Posterior cingulate gyrus (tissue), 11 donors: ENCODE measurements at regions of chr5 and their contacts with region 1.

Region 1: DNA sequence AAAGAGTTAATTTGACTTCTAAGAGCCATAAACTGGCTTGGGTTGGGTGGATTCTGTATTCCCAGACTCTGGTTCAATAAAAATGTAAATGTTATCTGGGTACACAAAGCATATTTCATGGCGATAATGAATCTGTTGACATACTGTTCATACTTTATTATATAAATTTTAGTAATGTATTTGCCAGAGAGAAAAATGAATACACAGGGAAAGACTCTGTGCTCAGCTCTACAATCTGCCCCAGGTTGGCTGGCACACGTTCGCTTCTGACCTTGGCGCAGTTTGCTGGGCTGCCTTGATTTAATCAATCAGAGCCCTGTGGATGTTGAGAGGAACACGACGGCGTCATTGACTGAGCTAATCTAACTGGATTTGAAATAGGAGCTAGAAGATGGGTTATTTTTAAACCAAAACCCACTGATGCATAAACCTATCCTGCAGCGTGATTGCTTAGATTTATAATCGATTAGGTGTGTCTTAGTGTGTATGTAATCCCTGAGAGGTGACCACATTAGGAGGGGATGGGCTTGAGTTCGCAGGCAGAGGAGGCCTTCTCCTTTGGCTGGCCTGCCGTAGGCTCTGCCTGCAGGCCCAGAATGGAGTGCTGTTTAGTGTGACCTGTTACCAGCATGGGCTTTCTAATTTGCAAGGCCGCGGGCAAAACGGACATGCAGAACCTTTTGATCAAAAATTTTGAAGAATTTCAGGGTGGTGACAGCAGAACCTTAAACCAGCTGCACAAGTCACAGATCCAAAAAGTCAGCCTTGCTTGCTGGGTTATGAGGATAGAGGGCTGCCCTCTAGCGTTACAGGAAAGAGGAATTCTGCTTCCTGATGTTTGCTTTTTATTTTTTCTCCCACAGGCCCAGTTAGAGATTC is 3.9 kb upstream of the ADCY2 start:
- DNase-seq: peak in 2 of 10 donors; percentile 31 to 35

Region 2: DNA sequence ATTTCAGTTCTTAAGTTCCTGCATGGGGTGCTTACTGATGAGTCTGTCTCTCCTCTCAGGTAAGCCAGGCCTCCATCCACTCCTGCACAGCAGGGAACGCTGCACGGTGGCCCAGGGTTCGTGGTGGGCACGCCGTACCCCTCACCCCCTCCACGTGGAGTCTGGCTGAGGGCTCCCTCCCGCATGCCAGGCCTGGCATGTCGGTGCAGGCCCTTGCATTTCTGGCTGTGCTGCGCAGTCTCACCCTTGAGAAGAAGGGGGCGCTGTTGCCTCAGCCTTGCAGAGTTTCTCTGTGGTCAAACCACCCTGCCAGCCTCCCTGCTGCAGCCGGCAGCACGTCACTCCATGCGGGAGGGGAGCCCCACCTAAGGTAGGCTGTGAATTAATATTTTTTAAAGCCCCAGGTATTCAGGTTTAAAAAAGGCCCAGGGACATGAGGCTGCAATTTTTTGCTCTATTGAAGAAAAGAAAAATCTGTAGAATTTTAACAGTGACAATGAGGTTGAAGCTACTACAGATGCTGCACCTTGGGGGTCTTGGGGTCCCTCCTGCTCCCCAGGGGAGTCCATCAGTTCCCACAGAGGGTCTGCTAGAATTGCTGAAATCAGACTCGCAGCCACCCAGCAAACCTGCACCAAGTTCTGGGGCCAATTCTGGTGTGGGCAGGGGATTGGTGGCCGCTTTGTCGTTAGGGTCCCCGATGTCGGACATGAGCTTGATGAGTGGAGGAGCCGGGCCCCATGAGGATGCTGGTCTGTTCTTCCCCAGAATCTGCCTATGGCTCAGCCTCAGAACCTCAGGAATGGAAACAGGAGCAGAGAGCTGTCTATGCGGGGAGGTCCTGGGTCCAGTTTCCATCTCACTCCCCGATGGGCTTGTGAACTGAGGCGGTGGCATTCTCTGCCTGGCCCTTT is 626.2 kb before region 1 on chr5:
- intact Hi-C with region 1: loop called (anchors 10 kb)
- DNase-seq: peak; percentile 70 to 97 (median 86)

Region 3: GRCh38 chr5:7779019-7780005 is 387.3 kb after region 1 on chr5:
- intact Hi-C with region 1: no loop called
- DNase-seq: no peak

Region 4: DNA sequence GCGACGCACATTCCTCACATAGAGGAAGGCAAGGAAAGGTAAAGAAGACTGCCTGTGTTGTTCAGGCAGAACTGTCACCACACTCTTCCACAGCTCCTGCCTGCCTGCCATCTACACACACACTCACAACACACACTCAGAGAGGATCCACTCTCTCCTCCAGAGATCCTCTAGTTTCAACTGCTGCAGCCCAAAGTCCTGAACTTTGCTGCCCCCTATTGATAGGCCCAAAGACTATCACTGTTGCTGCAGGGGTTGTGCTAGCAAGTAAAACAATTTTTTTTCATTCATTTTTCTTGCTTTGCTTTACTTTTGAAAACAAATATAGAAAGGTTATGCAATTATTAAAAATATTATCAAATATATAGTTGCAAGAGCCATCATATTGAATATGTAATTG is 464.8 kb after region 1 on chr5:
- intact Hi-C with region 1: loop called (anchors 10 kb)
- DNase-seq: peak; percentile 34 to 93 (median 66)